ENCODE measurements at regions of chr3 and their contacts with region 1.

Region 1: GRCh38 chr3:71616571-71617101 is 33.1 kb upstream of the FOXP1 start:
- DNase-seq: peak in 6 of 10 donors; percentile 9 to 68 (median 53)
- H3K4me3 ChIP-seq: no peak overlapping the region
- H3K27ac ChIP-seq: peak overlapping the region in 8 of 59 donors; percentile 2 to 43 (median 38)
- H3K27me3 ChIP-seq: no peaks in the 10 kb centered on the region
- CTCF ChIP-seq: no peak

Region 2: GRCh38 chr3:71599416-71599815 is 17.2 kb before region 1 on chr3:
- intact Hi-C with region 1: loop called in 1 of 2 experiments (anchors 1 kb)
- DNase-seq: no peak
- H3K4me3 ChIP-seq: no peak overlapping the region
- H3K27ac ChIP-seq: peak overlapping the region in 4 of 59 donors; percentile 9 to 41 (median 12)
- H3K27me3 ChIP-seq: peaks cover 0 to 2% (median 0%) of the 10 kb centered on the region in 45 donors
- CTCF ChIP-seq: no peak

Measured in dorsolateral prefrontal cortex (tissue), 120 donors.